ENCODE measurements at regions of chr5 and their contacts with region 1.

Region 1: GRCh38 chr5:72307968-72308852 is 11.8 kb downstream of the MRPS27 start:
- H3K4me3 Mint-ChIP-seq: peak overlapping the region; percentile 84
- H3K27ac Mint-ChIP-seq: peak overlapping the region; percentile 98
- H3K4me1 Mint-ChIP-seq: peaks cover 18% of the 10 kb centered on the region
- H3K27me3 Mint-ChIP-seq: no peaks in the 10 kb centered on the region

Region 2: GRCh38 chr5:71782771-71783770 is 525.1 kb before region 1 on chr5:
- intact Hi-C with region 1: loop called (anchors 5 kb)
- H3K4me3 Mint-ChIP-seq: no peak overlapping the region
- H3K27ac Mint-ChIP-seq: no peak overlapping the region
- H3K4me1 Mint-ChIP-seq: no peaks in the 10 kb centered on the region
- H3K27me3 Mint-ChIP-seq: peaks cover 2% of the 10 kb centered on the region

Region 3: GRCh38 chr5:72137826-72138409 is 170.3 kb before region 1 on chr5:
- intact Hi-C with region 1: loop called (anchors 2 kb)
- H3K4me3 Mint-ChIP-seq: no peak overlapping the region
- H3K27ac Mint-ChIP-seq: no peak overlapping the region
- H3K4me1 Mint-ChIP-seq: no peaks in the 10 kb centered on the region
- H3K27me3 Mint-ChIP-seq: peaks cover 30% of the 10 kb centered on the region

Region 4: GRCh38 chr5:72290356-72291133 is 17.7 kb before region 1 on chr5:
- intact Hi-C with region 1: no loop called
- H3K4me3 Mint-ChIP-seq: no peak overlapping the region
- H3K27ac Mint-ChIP-seq: no peak overlapping the region
- H3K4me1 Mint-ChIP-seq: peaks cover 7% of the 10 kb centered on the region
- H3K27me3 Mint-ChIP-seq: no peaks in the 10 kb centered on the region

Region 5: GRCh38 chr5:72319976-72320752 is 12.0 kb after region 1 on chr5 and contains the starts of genes MRPS27 and PTCD2:
- intact Hi-C with region 1: loop called (anchors 1 kb)
- H3K4me3 Mint-ChIP-seq: peak within 1 kb of the TSS; percentile 92
- H3K27ac Mint-ChIP-seq: peak within 1 kb of the TSS; percentile 89
- H3K4me1 Mint-ChIP-seq: peaks cover 15% of the 10 kb centered on the region
- H3K27me3 Mint-ChIP-seq: no peaks in the 10 kb centered on the region

Region 6: DNA sequence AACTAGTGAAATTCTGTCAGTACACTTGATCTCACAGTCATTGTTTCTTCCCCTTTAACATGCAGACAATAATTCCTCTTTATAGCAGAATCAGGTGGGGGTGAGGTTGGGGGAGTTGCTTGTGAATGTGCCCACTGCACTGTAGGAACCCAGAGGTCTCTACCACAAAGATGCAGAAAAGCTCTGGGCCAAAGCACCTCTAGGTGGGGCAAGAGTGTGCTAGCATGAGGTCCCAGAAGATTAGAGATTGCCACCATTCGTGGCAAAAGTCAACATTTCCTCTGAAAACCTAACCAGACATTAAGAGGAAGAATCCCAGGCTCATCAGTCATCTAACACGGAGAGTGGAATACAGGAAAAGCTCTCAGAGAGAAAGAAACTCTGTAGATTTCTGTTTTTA is 86.5 kb after region 1 on chr5:
- intact Hi-C with region 1: no loop called
- H3K4me3 Mint-ChIP-seq: no peak overlapping the region
- H3K27ac Mint-ChIP-seq: peak overlapping the region; percentile 86
- H3K4me1 Mint-ChIP-seq: peaks cover 81% of the 10 kb centered on the region
- H3K27me3 Mint-ChIP-seq: no peaks in the 10 kb centered on the region

Region 7: GRCh38 chr5:72816311-72817145 is 508.3 kb after region 1 on chr5 and contains the start of gene TNPO1:
- intact Hi-C with region 1: loop called (anchors 5 kb)
- H3K4me3 Mint-ChIP-seq: peak within 1 kb of the TSS; percentile 93
- H3K27ac Mint-ChIP-seq: peak within 1 kb of the TSS; percentile 94
- H3K4me1 Mint-ChIP-seq: peaks cover 17% of the 10 kb centered on the region
- H3K27me3 Mint-ChIP-seq: no peaks in the 10 kb centered on the region

Measured in dendritic cell treated with granulocyte-macrophage colony-stimulating factor and Interleukin-4, amounts not matched to agents 40 ng/mL and 50 ng/mL, for 4 days (primary cell).